PC-9 (cell line): ENCODE measurements at regions of chr12 and their contacts with region 1.

Region 1: DNA sequence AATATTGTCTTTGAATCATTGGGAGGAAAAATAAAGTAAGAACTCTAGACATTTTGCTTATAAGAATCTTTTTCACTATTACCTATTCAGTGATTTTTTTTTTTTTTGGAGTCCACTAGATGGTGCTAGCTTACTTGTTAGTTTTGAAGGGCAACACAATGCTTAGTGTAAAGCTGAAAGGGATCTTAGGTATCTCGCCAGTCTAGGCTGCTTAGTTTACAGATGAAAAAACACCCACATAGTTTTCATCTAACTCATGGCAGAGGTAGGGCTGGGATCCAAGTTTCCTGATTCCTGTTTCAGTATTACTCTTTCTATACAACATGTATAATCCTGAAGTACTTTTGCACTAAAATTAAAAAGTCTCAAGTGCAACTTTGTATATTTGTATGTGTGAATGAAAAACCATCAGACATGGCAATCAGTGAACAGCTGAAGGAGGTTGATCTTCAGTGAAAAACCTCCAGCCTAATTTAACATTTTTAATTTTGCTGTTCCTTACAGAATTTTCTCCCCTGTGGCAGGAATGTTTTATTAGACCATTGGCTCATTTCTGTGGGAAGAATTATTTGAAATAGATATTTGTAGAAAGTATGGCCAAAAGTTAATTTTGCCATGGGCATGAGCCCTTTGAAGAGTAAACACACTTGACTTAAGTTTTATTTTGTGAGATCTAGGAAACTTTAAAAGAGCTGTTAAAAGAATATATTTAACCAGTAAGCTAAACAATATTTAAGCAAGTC is 40.7 kb downstream of the LRRIQ1 start:
- DNase-seq: peak; percentile 41 to 85
- H3K4me3 ChIP-seq: no peak overlapping the region
- H3K27ac ChIP-seq: no peak overlapping the region
- H3K4me1 ChIP-seq: no peaks in the 10 kb centered on the region
- H3K27me3 ChIP-seq: no peaks in the 10 kb centered on the region
- CTCF ChIP-seq: peak; percentile 64

Region 2: DNA sequence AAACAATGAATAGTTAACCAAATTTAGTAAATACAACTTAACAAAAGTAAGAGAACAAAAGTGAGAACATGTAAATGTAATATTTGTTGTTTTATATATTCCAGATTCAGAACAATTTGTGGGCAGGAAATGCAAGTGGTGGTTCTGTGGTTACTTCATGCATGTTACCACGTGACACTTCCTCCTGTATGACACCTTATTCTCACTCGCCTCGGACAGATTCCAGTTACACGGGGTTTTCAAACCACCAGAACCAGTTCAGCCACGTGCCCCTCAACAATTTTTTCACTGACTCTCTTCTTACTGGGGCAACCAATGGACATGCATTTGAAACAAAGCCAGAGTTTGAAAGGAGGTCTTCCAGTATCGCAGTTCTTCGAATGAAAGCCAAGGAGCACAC is 224.2 kb after region 1 on chr12:
- CTCF ChIA-PET with region 1: no interaction called
- POLR2A ChIA-PET with region 1: no interaction called
- intact Hi-C with region 1: loop called (anchors 10 kb)
- DNase-seq: no peak
- H3K4me3 ChIP-seq: no peak overlapping the region
- H3K27ac ChIP-seq: no peak overlapping the region
- H3K4me1 ChIP-seq: no peaks in the 10 kb centered on the region
- H3K27me3 ChIP-seq: no peaks in the 10 kb centered on the region
- CTCF ChIP-seq: no peak

Region 3: DNA sequence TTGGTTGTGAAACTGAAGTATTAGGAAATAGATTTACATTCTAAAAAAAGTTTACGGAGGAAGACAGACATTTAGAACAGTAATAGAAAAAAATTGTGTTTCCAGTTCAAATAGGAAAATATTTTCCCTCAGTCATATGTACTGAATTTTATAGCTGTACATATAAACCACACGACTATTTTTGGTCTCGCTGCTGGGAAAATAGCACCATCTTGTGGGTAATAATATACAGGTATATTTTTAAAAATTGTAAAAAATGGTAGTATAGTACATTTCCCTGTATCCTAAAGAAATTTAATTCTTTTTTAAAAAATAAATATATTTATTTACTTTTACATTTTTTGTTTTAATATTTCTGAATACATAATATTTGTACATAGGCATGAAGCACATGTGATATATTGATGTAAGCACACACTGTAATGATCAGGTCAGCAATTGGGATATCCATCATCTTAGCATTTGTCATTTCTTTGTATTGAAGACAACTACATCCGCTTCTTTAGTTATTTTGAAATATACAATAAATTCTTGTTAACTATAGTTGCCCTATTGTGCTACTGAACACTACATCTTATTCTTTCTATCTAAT is 371.8 kb after region 1 on chr12:
- CTCF ChIA-PET with region 1: no interaction called
- POLR2A ChIA-PET with region 1: no interaction called
- intact Hi-C with region 1: loop called (anchors 1 kb)
- DNase-seq: no peak
- H3K4me3 ChIP-seq: no peak overlapping the region
- H3K27ac ChIP-seq: no peak overlapping the region
- H3K4me1 ChIP-seq: no peaks in the 10 kb centered on the region
- H3K27me3 ChIP-seq: no peaks in the 10 kb centered on the region
- CTCF ChIP-seq: peak; percentile 64

Region 4: GRCh38 chr12:85872497-85873091 is 795.7 kb after region 1 on chr12:
- CTCF ChIA-PET with region 1: interaction called, 3 read pairs
- POLR2A ChIA-PET with region 1: no interaction called
- intact Hi-C with region 1: loop called (anchors 5 kb)
- DNase-seq: no peak
- H3K4me3 ChIP-seq: no peak overlapping the region
- H3K27ac ChIP-seq: no peak overlapping the region
- H3K4me1 ChIP-seq: no peaks in the 10 kb centered on the region
- H3K27me3 ChIP-seq: no peaks in the 10 kb centered on the region
- CTCF ChIP-seq: peak; percentile 83